Endothelial cell of umbilical vein (primary cell): ENCODE measurements at regions of chr12 and their contacts with region 1.

Region 1: DNA sequence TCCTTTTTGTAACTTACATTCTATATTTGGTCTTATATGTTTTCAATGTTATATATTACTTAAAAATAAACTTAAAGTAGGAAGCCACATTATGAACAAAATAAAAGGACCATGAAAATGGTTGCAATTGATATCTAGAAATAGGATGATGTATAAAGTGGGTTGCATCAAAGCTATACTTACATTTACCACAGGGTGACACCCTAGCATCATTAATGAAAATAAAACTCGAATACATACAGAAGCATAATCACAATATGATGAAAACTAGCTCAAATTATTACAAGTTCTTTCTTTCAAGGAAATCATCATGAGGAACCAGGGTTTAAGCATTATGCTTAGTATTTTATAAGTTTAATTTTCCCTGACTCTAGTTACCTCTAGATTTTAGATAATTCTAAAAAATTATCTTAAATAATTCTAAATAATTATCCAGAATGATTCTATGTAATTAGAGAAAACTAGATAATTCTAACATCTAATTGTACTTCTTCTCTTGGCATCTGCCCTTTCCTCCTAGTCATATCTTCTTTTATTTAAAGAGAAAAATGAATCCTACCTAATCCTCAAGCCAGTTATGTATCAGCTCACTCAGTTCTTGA is 31.2 kb downstream of the TAS2R7 start:
- DNase-seq: peak; percentile 69
- H3K4me3 ChIP-seq: no peak overlapping the region
- H3K27ac ChIP-seq: no peak overlapping the region
- H3K4me1 ChIP-seq: no peaks in the 10 kb centered on the region
- H3K27me3 ChIP-seq: peaks cover 49 to 79% of the 10 kb centered on the region in 2 experiments
- CTCF ChIP-seq: peak; percentile 35 to 46
- POLR2A ChIP-seq: no peak

Region 2: DNA sequence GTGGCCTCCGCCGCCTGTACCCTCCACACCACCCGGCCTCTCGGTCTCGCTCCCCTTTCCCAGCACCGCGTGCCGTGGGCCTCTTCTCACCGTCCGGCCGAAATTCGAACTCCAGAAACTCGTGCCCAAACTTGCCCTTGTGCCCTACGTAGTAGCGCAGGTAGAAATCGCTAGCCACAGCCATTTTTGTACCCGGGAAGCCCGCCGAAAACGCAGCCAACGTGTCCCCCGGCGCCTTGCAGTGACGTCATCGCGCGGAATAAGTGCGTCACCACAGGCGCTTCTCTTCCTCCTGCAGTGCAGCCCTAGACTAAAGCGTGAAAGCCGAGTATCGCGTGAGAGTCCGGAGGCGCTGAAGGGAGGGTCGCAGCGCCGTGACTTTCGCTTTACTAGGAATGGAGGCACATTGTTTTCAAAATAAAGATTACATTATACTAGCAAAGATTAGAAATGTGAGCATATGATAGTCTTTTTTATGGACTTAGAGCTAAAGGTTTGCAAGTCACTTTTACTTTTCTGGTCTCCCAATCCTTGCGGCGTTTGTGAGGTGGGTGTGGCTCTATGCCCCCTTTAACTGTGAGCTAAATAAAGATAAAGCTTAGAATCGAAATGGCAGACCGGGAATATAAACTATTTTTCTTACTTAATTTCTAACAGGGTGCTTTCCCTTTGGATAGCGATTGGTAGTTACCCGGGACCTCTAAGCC is 157.7 kb before region 1 on chr12 and contains the start of gene MAGOHB:
- CTCF ChIA-PET with region 1: no interaction called
- POLR2A ChIA-PET with region 1: no interaction called
- dilution Hi-C with region 1: no loop called
- intact Hi-C with region 1: no loop called
- DNase-seq: peak; percentile 95
- H3K4me3 ChIP-seq: peak within 1 kb of the TSS; percentile 58 to 96 (median 93)
- H3K27ac ChIP-seq: peak within 1 kb of the TSS; percentile 90
- H3K4me1 ChIP-seq: peaks cover 18% of the 10 kb centered on the region
- H3K27me3 ChIP-seq: no peaks in the 10 kb centered on the region
- CTCF ChIP-seq: no peak
- POLR2A ChIP-seq: peak; percentile 70
- total RNA-seq, gene MAGOHB: 45.4 and 48.3 TPM in 2 replicates

Region 3: DNA sequence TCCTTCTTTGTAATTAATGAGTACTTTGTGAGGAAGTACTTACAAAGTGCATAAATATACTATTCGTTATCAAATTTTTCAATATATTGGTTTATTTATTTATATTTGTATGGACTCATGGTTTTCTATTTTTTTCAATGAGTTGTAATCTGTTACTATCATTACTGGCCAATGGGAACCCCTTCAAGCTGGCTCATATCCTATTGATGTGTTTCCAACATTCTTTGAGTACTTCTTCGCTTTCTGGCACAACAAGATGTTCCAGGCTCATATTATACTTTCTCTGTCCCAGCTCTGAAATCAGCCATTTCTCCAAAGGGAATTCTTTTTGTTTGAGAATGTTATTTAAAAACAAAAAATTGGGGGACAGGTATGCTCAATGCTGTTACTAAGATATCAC is 65.6 kb before region 1 on chr12:
- CTCF ChIA-PET with region 1: no interaction called
- POLR2A ChIA-PET with region 1: no interaction called
- dilution Hi-C with region 1: no loop called
- intact Hi-C with region 1: no loop called
- DNase-seq: no peak
- H3K4me3 ChIP-seq: no peak overlapping the region
- H3K27ac ChIP-seq: no peak overlapping the region
- H3K4me1 ChIP-seq: no peaks in the 10 kb centered on the region
- H3K27me3 ChIP-seq: no peaks in the 10 kb centered on the region
- CTCF ChIP-seq: no peak
- POLR2A ChIP-seq: no peak

Region 4: GRCh38 chr12:10740182-10740581 is 31.1 kb before region 1 on chr12:
- CTCF ChIA-PET with region 1: no interaction called
- POLR2A ChIA-PET with region 1: no interaction called
- dilution Hi-C with region 1: no loop called
- intact Hi-C with region 1: no loop called
- DNase-seq: no peak
- H3K4me3 ChIP-seq: no peak overlapping the region
- H3K27ac ChIP-seq: no peak overlapping the region
- H3K4me1 ChIP-seq: no peaks in the 10 kb centered on the region
- H3K27me3 ChIP-seq: peaks cover 0 to 3% of the 10 kb centered on the region in 2 experiments
- CTCF ChIP-seq: no peak
- POLR2A ChIP-seq: no peak

Region 5: GRCh38 chr12:11228296-11228879 is 457.2 kb after region 1 on chr12:
- CTCF ChIA-PET with region 1: interaction called, 59 read pairs
- POLR2A ChIA-PET with region 1: no interaction called
- dilution Hi-C with region 1: no loop called
- intact Hi-C with region 1: loop called (anchors 1 kb)
- DNase-seq: peak; percentile 73
- H3K4me3 ChIP-seq: no peak overlapping the region
- H3K27ac ChIP-seq: no peak overlapping the region
- H3K4me1 ChIP-seq: no peaks in the 10 kb centered on the region
- H3K27me3 ChIP-seq: peaks cover 5 to 13% of the 10 kb centered on the region in 2 experiments
- CTCF ChIP-seq: peak; percentile 80 to 84
- POLR2A ChIP-seq: no peak

Region 6: GRCh38 chr12:11508699-11509098 is 737.5 kb after region 1 on chr12:
- CTCF ChIA-PET with region 1: interaction called, 29 read pairs
- POLR2A ChIA-PET with region 1: no interaction called
- dilution Hi-C with region 1: no loop called
- intact Hi-C with region 1: no loop called
- DNase-seq: no peak
- H3K4me3 ChIP-seq: no peak overlapping the region
- H3K27ac ChIP-seq: no peak overlapping the region
- H3K4me1 ChIP-seq: no peaks in the 10 kb centered on the region
- H3K27me3 ChIP-seq: peaks cover 4 to 21% of the 10 kb centered on the region in 2 experiments
- CTCF ChIP-seq: no peak
- POLR2A ChIP-seq: no peak